GM10248 (cell line): ENCODE measurements at regions of chr11 and their contacts with region 1.

Region 1: GRCh38 chr11:120215634-120216033 is 4.8 kb downstream of the OAF start:
- DNase-seq: no peak
- CTCF ChIP-seq: no peak

Region 2: DNA sequence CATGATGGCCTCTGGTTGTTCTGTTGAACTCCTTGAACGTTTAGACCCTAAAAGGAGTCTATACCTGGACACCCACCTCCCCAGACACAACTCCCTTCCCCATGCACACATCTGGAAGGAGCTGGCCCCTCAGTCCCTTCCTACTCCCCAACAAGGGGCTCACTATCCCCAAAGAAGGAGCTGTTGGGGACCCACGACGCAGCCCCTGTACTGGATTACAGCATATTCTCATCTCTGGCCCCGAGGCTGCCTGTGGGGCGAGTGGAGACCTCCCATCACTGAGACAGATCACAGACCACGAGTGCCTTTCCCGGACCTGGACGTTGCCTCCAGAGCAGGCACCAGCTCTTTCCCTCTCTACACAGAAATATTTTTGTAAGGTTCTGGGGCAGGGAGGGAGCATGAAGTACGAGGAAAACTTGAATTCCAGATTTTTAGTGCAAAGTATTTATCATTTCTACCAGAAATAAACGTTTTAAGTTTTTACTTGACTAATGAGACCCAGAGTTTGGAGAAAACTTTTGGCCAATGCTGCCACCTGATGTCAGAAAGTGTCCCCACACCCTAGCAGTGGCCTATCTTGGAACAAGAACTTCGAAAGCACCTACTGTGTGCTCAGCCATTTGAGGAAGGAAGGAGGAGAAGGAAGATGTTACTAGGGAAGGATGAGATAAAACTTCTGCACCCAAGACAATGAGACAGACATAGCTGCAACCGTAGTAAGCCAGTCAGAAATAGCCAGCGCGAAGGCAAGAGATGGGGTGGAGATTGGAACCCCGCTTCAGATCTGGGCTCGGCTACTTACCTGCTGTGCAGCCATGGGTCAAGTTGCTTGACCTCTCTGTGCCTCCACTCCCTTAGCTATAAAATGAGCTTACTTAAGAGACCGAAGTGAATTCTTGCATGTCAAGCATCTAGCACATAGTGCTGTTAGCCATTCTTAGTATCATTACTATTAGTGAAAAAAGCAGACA is 14.1 kb after region 1 on chr11:
- CTCF ChIA-PET with region 1: interaction called, 36 read pairs
- POLR2A ChIA-PET with region 1: no interaction called
- DNase-seq: peak; percentile 52
- CTCF ChIP-seq: peak; percentile 74